ENCODE measurements at regions of chr14 and their contacts with region 1.

Region 1: DNA sequence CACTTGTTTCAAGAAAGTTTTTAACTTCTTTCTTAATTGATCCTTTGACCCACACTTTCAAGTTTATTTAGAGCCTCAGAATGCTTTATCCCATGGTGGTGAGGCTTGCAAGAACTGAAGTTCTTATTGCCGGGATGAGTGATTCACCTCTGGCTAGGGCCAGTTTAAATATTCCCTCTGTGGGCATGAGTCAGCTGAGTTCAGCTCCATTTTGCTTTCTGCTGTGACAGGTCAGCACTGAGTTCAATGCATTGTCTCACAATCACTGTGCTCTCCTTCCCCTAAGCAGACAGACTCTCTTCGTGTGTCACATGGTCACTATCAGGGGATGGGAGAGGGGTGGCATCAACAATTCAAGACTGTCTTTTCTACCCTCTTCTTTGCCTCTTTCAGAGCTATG is 514.6 kb upstream of the FBXO33 start:
- DNase-seq: no peak
- ATAC-seq: no peak
- H3K4me3 ChIP-seq: no peak overlapping the region
- H3K27ac ChIP-seq: no peak overlapping the region
- H3K4me1 ChIP-seq: no peaks in the 10 kb centered on the region
- H3K27me3 ChIP-seq: no peaks in the 10 kb centered on the region
- CTCF ChIP-seq: no peak
- POLR2A ChIP-seq: no peak
- RAD21 ChIP-seq: no peak

Region 2: GRCh38 chr14:39491134-39491571 is 455.7 kb before region 1 on chr14:
- CTCF ChIA-PET with region 1: no interaction called
- POLR2A ChIA-PET with region 1: no interaction called
- RAD21 ChIA-PET with region 1: no interaction called
- intact Hi-C with region 1: loop called (anchors 5 kb)
- DNase-seq: peak; percentile 22
- ATAC-seq: no peak
- H3K4me3 ChIP-seq: no peak overlapping the region
- H3K27ac ChIP-seq: no peak overlapping the region
- H3K4me1 ChIP-seq: peaks cover 0 to 16% of the 10 kb centered on the region in 2 experiments; a peak in 3 of 4 replicates
- H3K27me3 ChIP-seq: no peaks in the 10 kb centered on the region
- CTCF ChIP-seq: peak in 1 of 3 experiments; percentile 61; a peak in 2 of 6 replicates
- POLR2A ChIP-seq: no peak
- RAD21 ChIP-seq: peak; percentile 42

Measured in HCT116 (cell line).